ENCODE measurements at regions of chr2 and their contacts with region 1.

Region 1: GRCh38 chr2:235135990-235136561 is 184.3 kb downstream of the SH3BP4 start:
- DNase-seq: peak; percentile 82 to 89
- ATAC-seq: no peak
- H3K4me3 ChIP-seq: no peak overlapping the region
- H3K27ac ChIP-seq: no peak overlapping the region
- H3K4me1 ChIP-seq: no peaks in the 10 kb centered on the region
- H3K27me3 ChIP-seq: no peaks in the 10 kb centered on the region

Region 2: GRCh38 chr2:235746257-235747084 is 610.4 kb after region 1 on chr2:
- intact Hi-C with region 1: loop called (anchors 5 kb)
- DNase-seq: no peak
- ATAC-seq: peak; percentile 87
- H3K4me3 ChIP-seq: no peak overlapping the region
- H3K27ac ChIP-seq: no peak overlapping the region
- H3K4me1 ChIP-seq: no peaks in the 10 kb centered on the region
- H3K27me3 ChIP-seq: no peaks in the 10 kb centered on the region